B cell (primary cell): ENCODE measurements at regions of chr11 and their contacts with region 1.

Region 1: DNA sequence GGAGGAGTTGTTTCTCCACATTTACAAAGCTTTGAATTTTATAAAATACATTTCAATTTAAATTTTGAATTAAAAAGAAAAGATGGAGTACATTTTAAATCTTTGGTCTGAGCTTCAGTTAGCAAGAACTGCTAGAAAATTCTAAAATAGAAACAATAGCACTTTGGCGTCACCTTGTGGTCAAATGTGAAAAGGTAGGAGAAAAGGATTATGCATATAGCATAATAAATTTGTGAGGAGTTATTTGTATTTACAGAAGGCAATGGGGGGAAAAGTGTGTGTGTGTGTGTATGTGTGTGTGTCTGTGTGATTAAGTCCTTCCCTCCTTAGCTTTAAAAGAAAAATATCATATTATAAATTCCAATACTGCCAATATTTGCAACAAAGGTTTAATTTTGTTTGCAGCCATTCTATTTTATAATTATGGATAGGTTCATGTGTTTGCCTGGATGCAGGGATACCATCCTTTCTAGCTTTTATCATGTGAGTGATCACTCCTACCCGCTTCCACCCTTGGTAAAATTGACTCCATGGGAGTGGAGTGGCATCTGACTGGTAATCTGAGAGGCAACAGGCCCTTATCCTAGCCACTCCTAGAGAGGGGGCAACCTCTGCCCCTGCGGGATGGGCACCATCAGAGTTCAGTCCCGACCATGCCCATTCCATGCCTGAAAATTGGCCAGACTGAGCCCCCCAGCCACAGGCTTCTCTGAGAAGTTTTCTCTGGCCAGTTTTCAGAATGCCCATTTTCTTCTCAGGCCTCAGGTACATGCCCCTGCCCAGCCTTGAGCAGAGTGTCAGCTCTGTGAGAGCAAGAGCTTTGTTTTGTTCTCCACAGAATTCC is 13.6 kb upstream of the LGR4 start:
- DNase-seq: peak; percentile 63
- ATAC-seq: peak; percentile 45
- H3K4me3 ChIP-seq: no peak overlapping the region
- H3K4me3 Mint-ChIP-seq: no peak overlapping the region
- H3K27ac ChIP-seq: no peak overlapping the region
- H3K27ac Mint-ChIP-seq: no peak overlapping the region
- H3K4me1 ChIP-seq: no peaks in the 10 kb centered on the region
- H3K4me1 Mint-ChIP-seq: no peaks in the 10 kb centered on the region
- H3K27me3 ChIP-seq: no peaks in the 10 kb centered on the region
- H3K27me3 Mint-ChIP-seq: no peaks in the 10 kb centered on the region
- CTCF ChIP-seq: peak; percentile 97

Region 2: DNA sequence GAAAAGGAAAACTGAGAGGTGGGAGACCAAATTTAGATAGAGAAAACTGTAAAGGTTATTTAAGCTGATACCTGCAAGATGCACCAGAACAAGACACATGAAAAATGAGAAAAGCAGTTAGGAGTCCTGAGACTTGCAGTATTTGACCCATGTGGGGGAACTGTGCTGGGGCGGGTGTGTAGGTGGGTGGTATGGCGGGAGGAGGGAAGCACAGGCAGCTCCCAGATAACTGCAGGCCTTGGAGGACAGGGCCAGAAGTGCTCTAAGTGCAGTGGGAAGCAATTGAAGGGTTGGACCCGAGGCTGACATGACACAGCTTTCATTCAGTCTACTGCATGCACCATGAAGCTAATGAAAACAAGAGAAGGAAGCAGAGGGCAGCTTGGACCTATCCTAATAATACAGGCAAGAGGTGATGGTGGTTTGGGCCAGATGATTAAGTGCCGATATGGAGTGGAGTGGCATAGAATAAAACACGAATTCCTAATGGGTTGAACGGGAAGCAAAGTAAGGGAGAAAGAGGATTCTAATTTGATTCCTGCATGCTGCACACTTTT is 1202.2 kb before region 1 on chr11:
- CTCF ChIA-PET with region 1: interaction called, 6 read pairs
- POLR2A ChIA-PET with region 1: no interaction called
- intact Hi-C with region 1: loop called (anchors 5 kb)
- DNase-seq: no peak
- ATAC-seq: no peak
- H3K4me3 ChIP-seq: no peak overlapping the region
- H3K4me3 Mint-ChIP-seq: peak overlapping the region; percentile 72
- H3K27ac ChIP-seq: no peak overlapping the region
- H3K27ac Mint-ChIP-seq: no peak overlapping the region
- H3K4me1 ChIP-seq: no peaks in the 10 kb centered on the region
- H3K4me1 Mint-ChIP-seq: peaks cover 7% of the 10 kb centered on the region
- H3K27me3 ChIP-seq: peaks cover 0 to 4% (median 2%) of the 10 kb centered on the region in 4 experiments
- H3K27me3 Mint-ChIP-seq: peaks cover 14% of the 10 kb centered on the region
- CTCF ChIP-seq: no peak

Region 3: DNA sequence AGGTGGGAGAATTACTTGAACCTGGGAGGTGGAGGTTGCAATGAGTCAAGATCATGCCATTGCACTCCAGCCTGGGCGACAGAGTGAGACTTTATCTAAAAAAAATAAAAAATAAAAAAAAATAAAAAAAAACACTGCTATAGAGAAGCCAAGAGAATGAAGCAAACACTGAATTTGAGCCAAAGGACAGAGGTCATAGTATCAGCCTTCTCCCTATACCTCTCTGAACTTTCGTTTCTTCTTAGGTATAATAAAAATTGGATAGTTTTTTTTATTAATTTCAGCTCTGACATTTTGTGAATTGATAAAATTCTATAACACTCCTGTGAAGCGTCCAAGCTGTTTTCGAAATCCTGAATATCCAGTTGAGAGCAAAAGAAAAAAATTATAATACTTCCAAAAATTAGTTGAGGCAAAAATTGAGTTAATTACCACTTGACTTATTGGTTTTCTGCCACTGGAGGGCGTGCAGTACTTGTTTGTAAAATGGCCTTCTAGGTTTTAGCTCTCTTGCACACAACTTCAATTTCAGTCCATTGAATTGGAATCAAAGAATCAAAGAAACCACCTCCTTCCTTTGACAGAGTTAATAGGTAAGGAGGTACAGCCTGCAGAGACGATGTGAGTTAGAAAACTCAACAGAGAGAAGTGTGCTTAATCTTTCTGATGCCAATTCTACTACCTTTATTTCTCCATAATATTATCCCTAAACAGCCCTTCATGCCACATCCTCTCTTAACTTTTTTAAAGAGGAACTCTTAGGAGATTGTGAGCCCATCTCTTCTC is 302.3 kb before region 1 on chr11:
- CTCF ChIA-PET with region 1: interaction called, 93 read pairs
- POLR2A ChIA-PET with region 1: no interaction called
- intact Hi-C with region 1: loop called (anchors 1 kb)
- DNase-seq: peak; percentile 46
- ATAC-seq: no peak
- H3K4me3 ChIP-seq: no peak overlapping the region
- H3K4me3 Mint-ChIP-seq: no peak overlapping the region
- H3K27ac ChIP-seq: no peak overlapping the region
- H3K27ac Mint-ChIP-seq: no peak overlapping the region
- H3K4me1 ChIP-seq: no peaks in the 10 kb centered on the region
- H3K4me1 Mint-ChIP-seq: no peaks in the 10 kb centered on the region
- H3K27me3 ChIP-seq: peaks cover 0 to 2% (median 0%) of the 10 kb centered on the region in 4 experiments
- H3K27me3 Mint-ChIP-seq: peaks cover 10% of the 10 kb centered on the region
- CTCF ChIP-seq: peak; percentile 64

Region 4: GRCh38 chr11:27497284-27497866 is 11.2 kb after region 1 on chr11:
- CTCF ChIA-PET with region 1: interaction called, 118 read pairs
- POLR2A ChIA-PET with region 1: no interaction called
- intact Hi-C with region 1: no loop called
- DNase-seq: peak; percentile 24
- ATAC-seq: no peak
- H3K4me3 ChIP-seq: no peak overlapping the region
- H3K4me3 Mint-ChIP-seq: no peak overlapping the region
- H3K27ac ChIP-seq: no peak overlapping the region
- H3K27ac Mint-ChIP-seq: no peak overlapping the region
- H3K4me1 ChIP-seq: no peaks in the 10 kb centered on the region
- H3K4me1 Mint-ChIP-seq: peaks cover 9% of the 10 kb centered on the region
- H3K27me3 ChIP-seq: no peaks in the 10 kb centered on the region
- H3K27me3 Mint-ChIP-seq: no peaks in the 10 kb centered on the region
- CTCF ChIP-seq: peak; percentile 72

Region 5: GRCh38 chr11:28243581-28243980 is 757.4 kb after region 1 on chr11:
- CTCF ChIA-PET with region 1: no interaction called
- POLR2A ChIA-PET with region 1: no interaction called
- intact Hi-C with region 1: no loop called
- DNase-seq: no peak
- ATAC-seq: no peak
- H3K4me3 ChIP-seq: no peak overlapping the region
- H3K4me3 Mint-ChIP-seq: no peak overlapping the region
- H3K27ac ChIP-seq: no peak overlapping the region
- H3K27ac Mint-ChIP-seq: no peak overlapping the region
- H3K4me1 ChIP-seq: no peaks in the 10 kb centered on the region
- H3K4me1 Mint-ChIP-seq: no peaks in the 10 kb centered on the region
- H3K27me3 ChIP-seq: no peaks in the 10 kb centered on the region
- H3K27me3 Mint-ChIP-seq: no peaks in the 10 kb centered on the region
- CTCF ChIP-seq: no peak